Heart left ventricle (tissue), 16 donors: ENCODE measurements at regions of chr15 and their contacts with region 1.

Region 1: GRCh38 chr15:92683232-92683834 is 27.8 kb upstream of the FAM174B start:
- DNase-seq: peak in 4 of 5 donors; percentile 35 to 53 (median 40)
- ATAC-seq: peak in 3 of 4 donors; percentile 57 to 76 (median 61)
- H3K4me3 ChIP-seq: no peak overlapping the region
- H3K27ac ChIP-seq: peak overlapping the region in 3 of 12 donors; percentile 7 to 70 (median 16)
- H3K4me1 ChIP-seq: peaks cover 0 to 21% (median under 1%) of the 10 kb centered on the region in 12 donors
- H3K27me3 ChIP-seq: no peaks in the 10 kb centered on the region
- CTCF ChIP-seq: peak; percentile 22 to 75 (median 68)
- POLR2A ChIP-seq: no peak

Region 2: DNA sequence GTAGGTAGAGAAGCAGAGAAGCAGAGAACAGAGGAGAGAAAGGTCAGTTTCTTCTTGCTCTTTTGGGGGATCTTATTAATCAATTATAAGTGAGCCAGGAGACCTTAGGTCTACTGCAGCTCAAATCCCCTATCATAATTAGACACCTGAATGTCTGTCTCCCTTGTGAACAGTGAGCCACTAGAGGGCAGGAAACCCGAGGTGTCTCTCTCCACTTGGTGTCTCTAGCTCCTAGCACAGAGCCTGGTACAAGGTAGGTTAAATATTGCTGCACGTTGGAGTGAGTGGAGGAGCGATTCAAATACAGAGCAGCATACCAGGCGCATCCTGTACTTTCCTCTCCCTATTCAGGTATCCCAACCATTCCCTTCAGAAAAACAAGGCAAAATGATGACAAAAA is 291.7 kb before region 1 on chr15:
- intact Hi-C with region 1: loop called in 1 of 10 experiments (anchors 10 kb)
- DNase-seq: no peak
- ATAC-seq: peak in 3 of 4 donors; percentile 47 to 64 (median 60)
- H3K4me3 ChIP-seq: no peak overlapping the region
- H3K27ac ChIP-seq: no peak overlapping the region
- H3K4me1 ChIP-seq: peaks cover 0 to 24% (median 0%) of the 10 kb centered on the region in 12 donors
- H3K27me3 ChIP-seq: peaks cover 9 to 76% (median 25%) of the 10 kb centered on the region in 9 donors
- CTCF ChIP-seq: peak; percentile 8 to 54 (median 34)
- POLR2A ChIP-seq: no peak

Region 3: GRCh38 chr15:92400980-92401787 is 282.1 kb before region 1 on chr15:
- intact Hi-C with region 1: loop called in 2 of 10 experiments (anchors 10 kb)
- DNase-seq: peak in 1 of 5 donors; percentile 64
- ATAC-seq: peak in 1 of 4 donors; percentile 16
- H3K4me3 ChIP-seq: no peak overlapping the region
- H3K27ac ChIP-seq: no peak overlapping the region
- H3K4me1 ChIP-seq: no peaks in the 10 kb centered on the region
- H3K27me3 ChIP-seq: peaks cover 0 to 31% (median 0%) of the 10 kb centered on the region in 9 donors
- CTCF ChIP-seq: no peak
- POLR2A ChIP-seq: no peak

Region 4: DNA sequence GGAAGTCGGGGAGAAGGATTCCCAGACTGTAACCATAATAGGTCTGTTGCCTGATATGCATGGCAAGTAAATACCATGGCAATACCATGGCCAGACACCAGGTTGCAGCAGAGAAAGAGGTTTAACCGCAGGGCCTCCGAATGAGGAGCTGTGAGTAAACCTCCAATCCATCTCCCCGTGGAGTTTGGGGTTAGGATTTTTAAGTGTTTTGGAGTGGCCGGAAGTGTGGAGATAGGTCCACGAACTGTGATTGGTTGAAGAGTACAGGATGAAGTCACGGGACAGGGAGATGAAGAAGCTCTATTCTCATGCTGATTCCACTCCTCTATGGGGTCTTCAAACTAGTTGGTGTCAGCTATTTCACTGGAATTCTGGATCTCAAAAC is 161.7 kb before region 1 on chr15:
- intact Hi-C with region 1: loop called (anchors 1 to 10 kb)
- DNase-seq: peak in 4 of 5 donors; percentile 75 to 86 (median 80)
- ATAC-seq: peak; percentile 72 to 96 (median 95)
- H3K4me3 ChIP-seq: no peak overlapping the region
- H3K27ac ChIP-seq: no peak overlapping the region
- H3K4me1 ChIP-seq: peaks cover 0 to 8% (median 0%) of the 10 kb centered on the region in 12 donors
- H3K27me3 ChIP-seq: no peaks in the 10 kb centered on the region
- CTCF ChIP-seq: peak; percentile 57 to 93 (median 83)
- POLR2A ChIP-seq: no peak

Region 5: GRCh38 chr15:92617549-92618520 is 65.5 kb before region 1 on chr15:
- intact Hi-C with region 1: loop called in 1 of 10 experiments (anchors 5 kb)
- DNase-seq: peak; percentile 56 to 85 (median 74)
- ATAC-seq: peak; percentile 86 to 94 (median 90)
- H3K4me3 ChIP-seq: no peak overlapping the region
- H3K27ac ChIP-seq: peak overlapping the region in 11 of 12 donors; percentile 7 to 76 (median 53)
- H3K4me1 ChIP-seq: peaks cover 0 to 36% (median 21%) of the 10 kb centered on the region in 12 donors
- H3K27me3 ChIP-seq: no peaks in the 10 kb centered on the region
- CTCF ChIP-seq: no peak
- POLR2A ChIP-seq: no peak

Region 6: GRCh38 chr15:92655178-92655995 is 27.9 kb before region 1 on chr15 and contains the start of gene FAM174B:
- intact Hi-C with region 1: loop called in 1 of 10 experiments (anchors 2 kb)
- DNase-seq: peak; percentile 47 to 74 (median 51)
- ATAC-seq: peak in 3 of 4 donors; percentile 70 to 88 (median 80)
- H3K4me3 ChIP-seq: peak within 1 kb of the TSS; percentile 44 to 83 (median 64)
- H3K27ac ChIP-seq: peak within 1 kb of the TSS in 9 of 12 donors; percentile 4 to 73 (median 46)
- H3K4me1 ChIP-seq: peaks cover 0 to 48% (median 14%) of the 10 kb centered on the region in 12 donors
- H3K27me3 ChIP-seq: peaks cover 0 to 16% (median 0%) of the 10 kb centered on the region in 9 donors
- CTCF ChIP-seq: no peak
- POLR2A ChIP-seq: peak in 1 of 2 donors; percentile 18
- total RNA-seq, gene FAM174B: 9.6 to 22.2 (median 12.3) TPM